CD8-positive, alpha-beta memory T cell (primary cell): ENCODE measurements at regions of chr1 and their contacts with region 1.

Region 1: DNA sequence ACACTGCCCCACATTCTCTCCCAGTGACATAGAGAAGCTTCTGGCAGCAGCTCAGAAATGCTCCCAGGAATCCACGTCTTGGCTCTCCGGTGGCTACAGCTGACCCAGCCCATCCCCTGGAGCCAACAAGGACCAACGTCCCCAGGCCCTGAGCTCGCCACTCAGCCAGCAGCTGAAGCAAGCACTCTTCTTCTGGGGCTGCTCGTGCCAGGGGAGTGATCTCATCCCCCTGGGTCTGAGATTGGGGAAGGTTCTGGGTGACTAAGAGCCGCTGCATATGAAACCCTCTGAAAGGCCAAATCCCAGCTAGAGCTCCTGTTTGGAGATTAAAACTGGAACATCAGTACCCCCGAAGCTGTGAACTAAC is 487.9 kb downstream of the NPHP4 start:
- DNase-seq: peak in 1 of 5 donors; percentile 41
- H3K4me3 ChIP-seq: no peak overlapping the region
- H3K4me3 Mint-ChIP-seq: no peak overlapping the region
- H3K27ac ChIP-seq: no peak overlapping the region
- H3K27ac Mint-ChIP-seq: peak overlapping the region in 1 of 8 donors; percentile 29
- H3K4me1 ChIP-seq: no peaks in the 10 kb centered on the region
- H3K4me1 Mint-ChIP-seq: peaks cover 0 to under 1% (median 0%) of the 10 kb centered on the region in 3 donors
- H3K27me3 ChIP-seq: no peaks in the 10 kb centered on the region
- H3K27me3 Mint-ChIP-seq: peaks cover 0 to 10% of the 10 kb centered on the region in 2 donors

Region 2: GRCh38 chr1:5514519-5515183 is 10.3 kb after region 1 on chr1:
- CTCF ChIA-PET with region 1: interaction called, 18 read pairs
- POLR2A ChIA-PET with region 1: no interaction called
- DNase-seq: peak; percentile 41 to 75 (median 55)
- H3K4me3 ChIP-seq: no peak overlapping the region
- H3K4me3 Mint-ChIP-seq: no peak overlapping the region
- H3K27ac ChIP-seq: no peak overlapping the region
- H3K27ac Mint-ChIP-seq: no peak overlapping the region
- H3K4me1 ChIP-seq: no peaks in the 10 kb centered on the region
- H3K4me1 Mint-ChIP-seq: no peaks in the 10 kb centered on the region
- H3K27me3 ChIP-seq: peaks cover 6% of the 10 kb centered on the region
- H3K27me3 Mint-ChIP-seq: peaks cover 18 to 26% of the 10 kb centered on the region in 2 donors

Region 3: GRCh38 chr1:5525597-5526384 is 21.5 kb after region 1 on chr1:
- CTCF ChIA-PET with region 1: no interaction called
- POLR2A ChIA-PET with region 1: no interaction called
- DNase-seq: no peak
- H3K4me3 ChIP-seq: no peak overlapping the region
- H3K4me3 Mint-ChIP-seq: no peak overlapping the region
- H3K27ac ChIP-seq: no peak overlapping the region
- H3K27ac Mint-ChIP-seq: no peak overlapping the region
- H3K4me1 ChIP-seq: no peaks in the 10 kb centered on the region
- H3K4me1 Mint-ChIP-seq: peaks cover 0 to 8% (median 3%) of the 10 kb centered on the region in 3 donors
- H3K27me3 ChIP-seq: no peaks in the 10 kb centered on the region
- H3K27me3 Mint-ChIP-seq: peaks cover 24 to 28% of the 10 kb centered on the region in 2 donors